Esophagus muscularis mucosa (tissue), 4 donors: ENCODE measurements at regions of chr3 and their contacts with region 1.

Region 1: GRCh38 chr3:124078953-124079911 is 87.3 kb upstream of the ROPN1 start:
- DNase-seq: no peak
- H3K4me3 ChIP-seq: no peak overlapping the region
- H3K27ac ChIP-seq: no peak overlapping the region
- H3K4me1 ChIP-seq: peaks cover 15 to 26% (median 22%) of the 10 kb centered on the region in 4 donors
- H3K27me3 ChIP-seq: no peaks in the 10 kb centered on the region
- CTCF ChIP-seq: peak; percentile 73 to 88 (median 77)
- EP300 ChIP-seq: no peak
- POLR2A ChIP-seq: no peak

Region 2: DNA sequence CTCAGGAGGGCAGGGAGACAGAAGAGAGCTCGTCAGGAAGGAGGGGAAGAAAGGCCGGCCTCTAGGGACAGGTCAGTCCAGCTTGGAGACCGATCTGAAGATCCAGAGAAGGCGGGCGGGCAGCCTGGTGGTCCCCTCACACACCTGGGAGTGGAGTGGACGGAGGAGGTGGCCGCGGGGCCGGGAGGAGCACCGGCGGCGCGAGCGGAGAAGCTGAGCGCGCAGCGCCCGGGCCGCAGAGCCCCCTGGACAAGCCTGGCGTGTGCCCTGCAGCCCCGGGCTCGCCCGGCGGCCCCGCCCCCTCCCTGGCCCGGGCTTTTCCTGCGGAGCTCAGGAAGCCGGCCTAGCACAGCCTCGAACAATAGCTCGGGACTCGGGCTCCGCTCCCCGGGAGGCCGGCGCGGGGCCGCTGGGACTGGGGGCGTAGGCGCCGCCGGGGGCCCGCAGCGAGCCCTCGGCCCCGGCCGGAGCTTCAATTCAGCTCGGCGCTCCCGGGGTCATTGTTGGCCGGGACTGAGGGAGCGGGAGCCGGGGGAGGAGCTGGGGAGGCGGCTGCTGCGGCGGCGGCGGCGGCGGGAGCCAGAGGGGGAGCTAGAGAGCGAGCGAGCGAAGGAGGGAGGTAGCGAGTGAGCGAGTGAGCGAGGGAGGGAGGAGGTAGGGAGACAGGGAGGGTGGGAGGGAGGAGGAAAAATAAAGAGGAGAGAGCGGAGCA is 46.4 kb before region 1 on chr3:
- intact Hi-C with region 1: loop called (anchors 5 kb)
- DNase-seq: peak; percentile 95
- H3K4me3 ChIP-seq: peak overlapping the region; percentile 68 to 90 (median 85)
- H3K27ac ChIP-seq: peak overlapping the region; percentile 82 to 92 (median 88)
- H3K4me1 ChIP-seq: peaks cover 9 to 39% (median 27%) of the 10 kb centered on the region in 4 donors
- H3K27me3 ChIP-seq: peaks cover 0 to 11% (median 0%) of the 10 kb centered on the region in 4 donors
- CTCF ChIP-seq: peak; percentile 61 to 93 (median 76)
- EP300 ChIP-seq: no peak
- POLR2A ChIP-seq: no peak

Region 3: DNA sequence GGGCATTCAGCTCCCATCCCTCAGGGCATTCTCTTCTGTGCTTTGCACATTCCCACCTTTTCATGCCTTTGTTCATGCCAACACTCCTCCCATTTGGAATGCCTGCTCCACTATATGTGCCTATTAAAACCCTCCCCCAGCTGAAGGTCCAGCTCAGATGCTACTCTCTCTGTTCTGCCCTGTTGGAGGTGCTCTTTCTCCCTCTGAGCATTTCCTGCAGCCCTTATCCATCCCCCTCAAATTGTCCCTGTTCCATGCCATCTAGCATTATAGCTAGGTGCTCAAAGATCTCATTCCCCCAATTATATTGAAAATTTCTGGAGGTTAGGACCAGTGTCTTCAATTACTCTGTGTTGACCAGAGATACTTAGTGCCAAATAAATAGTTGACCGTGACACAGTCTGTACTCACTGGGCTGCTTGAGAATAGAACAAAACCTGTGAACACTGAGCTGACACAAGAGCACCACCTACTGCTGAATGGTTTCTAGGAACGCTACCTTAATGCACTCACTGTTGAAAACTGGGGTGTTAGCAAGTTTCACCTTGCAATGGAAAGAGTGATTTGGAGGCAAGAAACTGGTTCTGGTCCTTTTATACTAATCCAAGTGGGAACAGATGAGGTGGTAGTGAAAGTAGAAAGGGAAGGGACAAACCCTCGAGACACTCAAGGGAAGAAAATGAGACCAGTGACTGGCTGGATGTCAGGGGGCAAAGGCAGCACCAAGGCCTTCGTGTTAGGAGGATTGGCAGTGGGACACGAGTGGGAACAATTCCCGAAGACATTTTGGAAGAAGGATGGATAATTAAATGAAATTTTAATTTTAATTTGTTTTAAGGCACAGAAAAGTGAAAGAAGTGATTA is 202.5 kb after region 1 on chr3:
- intact Hi-C with region 1: loop called (anchors 2 kb)
- DNase-seq: peak; percentile 79
- H3K4me3 ChIP-seq: no peak overlapping the region
- H3K27ac ChIP-seq: peak overlapping the region; percentile 82 to 90 (median 85)
- H3K4me1 ChIP-seq: peaks cover 50 to 74% (median 63%) of the 10 kb centered on the region in 4 donors
- H3K27me3 ChIP-seq: no peaks in the 10 kb centered on the region
- CTCF ChIP-seq: peak; percentile 54 to 69 (median 68)
- EP300 ChIP-seq: no peak
- POLR2A ChIP-seq: no peak